Heart right ventricle (tissue), 16 donors: ENCODE measurements at regions of chr6 and their contacts with region 1.

Region 1: GRCh38 chr6:4066029-4066755 is 12.7 kb downstream of the FAM217A start:
- DNase-seq: no peak
- ATAC-seq: no peak
- H3K4me3 ChIP-seq: no peak overlapping the region
- H3K27ac ChIP-seq: no peak overlapping the region
- H3K4me1 ChIP-seq: no peaks in the 10 kb centered on the region
- H3K27me3 ChIP-seq: no peaks in the 10 kb centered on the region
- CTCF ChIP-seq: no peak

Region 2: DNA sequence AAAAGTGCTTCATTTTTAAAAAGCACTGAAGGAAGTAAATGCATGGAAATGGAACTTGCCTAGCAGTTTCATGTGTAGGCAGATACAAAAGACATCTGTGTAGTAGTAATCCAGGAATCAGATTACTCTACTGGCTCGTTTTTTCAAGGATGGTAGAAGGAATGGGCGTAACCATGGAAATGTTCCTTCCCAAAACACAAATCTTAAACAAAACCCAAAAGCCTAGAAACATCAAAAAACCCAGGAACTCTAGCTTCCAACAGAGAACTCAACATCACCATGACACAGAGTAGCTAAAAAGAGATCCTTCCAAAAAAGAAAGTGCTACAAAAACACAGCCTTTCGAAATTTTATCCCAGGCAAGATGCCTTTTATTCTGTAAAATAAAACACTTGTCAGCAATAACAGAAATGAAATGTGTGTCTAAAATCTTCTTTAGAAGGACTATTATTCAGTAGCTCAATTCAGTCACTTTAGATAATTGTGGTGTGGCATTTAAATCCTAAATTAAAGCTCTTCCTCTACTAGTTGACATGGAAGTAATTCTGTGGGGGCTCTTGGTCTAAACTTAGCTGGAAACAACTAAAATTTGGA is 68.9 kb before region 1 on chr6:
- intact Hi-C with region 1: no loop called
- DNase-seq: no peak
- ATAC-seq: peak in 5 of 8 donors; percentile 31 to 58 (median 39)
- H3K4me3 ChIP-seq: no peak overlapping the region
- H3K27ac ChIP-seq: peak overlapping the region in 1 of 10 donors; percentile 9
- H3K4me1 ChIP-seq: peaks cover 0 to 14% (median 0%) of the 10 kb centered on the region in 9 donors
- H3K27me3 ChIP-seq: no peaks in the 10 kb centered on the region
- CTCF ChIP-seq: no peak

Region 3: GRCh38 chr6:4008324-4009047 is 57.7 kb before region 1 on chr6:
- intact Hi-C with region 1: no loop called
- DNase-seq: no peak
- ATAC-seq: peak in 5 of 8 donors; percentile 42 to 76 (median 44)
- H3K4me3 ChIP-seq: no peak overlapping the region
- H3K27ac ChIP-seq: peak overlapping the region in 1 of 10 donors; percentile 28
- H3K4me1 ChIP-seq: peaks cover 0 to 33% (median 15%) of the 10 kb centered on the region in 9 donors
- H3K27me3 ChIP-seq: no peaks in the 10 kb centered on the region
- CTCF ChIP-seq: peak in 8 of 9 donors; percentile 24 to 60 (median 53)

Region 4: DNA sequence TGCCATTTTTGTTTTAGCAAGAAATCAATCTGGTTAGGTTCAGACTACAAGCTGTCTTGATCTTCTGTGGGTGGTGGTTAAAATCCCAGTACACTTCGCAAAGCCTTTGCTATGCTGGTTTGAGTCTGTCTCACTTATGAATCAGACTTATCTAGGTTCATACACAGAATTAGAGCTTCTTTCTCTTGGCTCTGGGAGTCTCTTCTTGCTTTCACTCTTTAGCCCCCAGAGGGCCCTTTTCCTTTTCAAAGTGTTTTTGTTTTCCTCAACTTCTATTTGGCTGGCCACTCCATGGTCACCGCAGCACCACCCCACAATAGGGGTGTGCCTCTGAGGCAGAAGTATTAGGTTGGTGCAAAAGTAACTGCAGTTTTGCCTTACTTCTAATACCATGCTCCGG is 47.9 kb after region 1 on chr6:
- intact Hi-C with region 1: loop called in 2 of 10 experiments (anchors 5 to 10 kb)
- DNase-seq: no peak
- ATAC-seq: no peak
- H3K4me3 ChIP-seq: no peak overlapping the region
- H3K27ac ChIP-seq: no peak overlapping the region
- H3K4me1 ChIP-seq: peaks cover 0 to 14% (median 8%) of the 10 kb centered on the region in 9 donors
- H3K27me3 ChIP-seq: no peaks in the 10 kb centered on the region
- CTCF ChIP-seq: no peak